ENCODE measurements at regions of chr1 and their contacts with region 1.

Region 1: GRCh38 chr1:157363660-157364140 is 188.6 kb downstream of the FCRL5 start:
- DNase-seq: peak; percentile 17
- H3K4me3 ChIP-seq: no peak overlapping the region
- H3K27ac ChIP-seq: no peak overlapping the region
- H3K4me1 ChIP-seq: no peaks in the 10 kb centered on the region
- H3K27me3 ChIP-seq: peaks cover 2% of the 10 kb centered on the region
- CTCF ChIP-seq: peak; percentile 60 to 79

Region 2: GRCh38 chr1:157176591-157177121 is 187.0 kb before region 1 on chr1:
- CTCF ChIA-PET with region 1: no interaction called
- dilution Hi-C with region 1: no loop called
- in situ Hi-C with region 1: no loop called
- intact Hi-C with region 1: loop called (anchors 5 kb)
- DNase-seq: no peak
- H3K4me3 ChIP-seq: no peak overlapping the region
- H3K27ac ChIP-seq: no peak overlapping the region
- H3K4me1 ChIP-seq: no peaks in the 10 kb centered on the region
- H3K27me3 ChIP-seq: peaks cover 2% of the 10 kb centered on the region
- CTCF ChIP-seq: no peak

Region 3: GRCh38 chr1:157307491-157307890 is 56.2 kb before region 1 on chr1:
- CTCF ChIA-PET with region 1: no interaction called
- dilution Hi-C with region 1: no loop called
- in situ Hi-C with region 1: no loop called
- intact Hi-C with region 1: no loop called
- DNase-seq: no peak
- H3K4me3 ChIP-seq: no peak overlapping the region
- H3K27ac ChIP-seq: no peak overlapping the region
- H3K4me1 ChIP-seq: no peaks in the 10 kb centered on the region
- H3K27me3 ChIP-seq: peaks cover 2% of the 10 kb centered on the region
- CTCF ChIP-seq: no peak

Region 4: DNA sequence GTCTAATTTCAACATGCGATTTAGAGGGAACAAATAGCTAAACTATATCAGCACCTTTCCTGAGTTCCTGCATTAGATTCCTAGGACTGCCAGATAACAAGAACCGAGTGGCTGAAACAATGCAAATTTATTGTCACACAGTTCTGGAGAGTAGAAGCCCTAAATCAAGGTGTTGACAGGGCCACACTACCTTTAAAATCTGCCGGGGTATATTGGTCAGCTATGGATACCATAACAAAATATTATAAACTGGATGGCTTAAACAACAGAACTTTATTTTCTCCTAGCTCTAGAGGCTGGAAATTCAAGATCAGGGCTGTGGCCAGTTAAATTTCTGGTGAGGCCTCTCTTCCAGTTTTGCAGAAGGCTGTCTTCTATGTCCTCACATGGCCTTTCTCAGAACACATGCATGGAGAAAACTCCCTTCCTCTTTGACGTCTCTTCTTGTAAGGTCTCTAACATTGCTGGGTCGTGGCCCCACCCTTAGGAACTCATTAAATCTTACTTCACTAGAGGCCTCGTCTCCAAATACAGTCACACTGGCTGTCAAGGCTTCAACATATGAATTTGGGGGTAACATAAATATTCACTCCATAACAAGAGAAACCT is 44.3 kb after region 1 on chr1:
- CTCF ChIA-PET with region 1: no interaction called
- dilution Hi-C with region 1: no loop called
- in situ Hi-C with region 1: no loop called
- intact Hi-C with region 1: no loop called
- DNase-seq: no peak
- H3K4me3 ChIP-seq: no peak overlapping the region
- H3K27ac ChIP-seq: no peak overlapping the region
- H3K4me1 ChIP-seq: no peaks in the 10 kb centered on the region
- H3K27me3 ChIP-seq: no peaks in the 10 kb centered on the region
- CTCF ChIP-seq: no peak